Naive thymus-derived CD4-positive, alpha-beta T cell (primary cell): ENCODE measurements at regions of chr3 and their contacts with region 1.

Region 1: GRCh38 chr3:50568947-50569749 is at the start of gene HEMK1:
- DNase-seq: peak; percentile 71 to 95 (median 90)
- ATAC-seq: peak; percentile 81
- H3K4me3 ChIP-seq: peak within 1 kb of the TSS; percentile 97
- H3K4me3 Mint-ChIP-seq: peak within 1 kb of the TSS; percentile 86 to 99 (median 96)
- H3K27ac ChIP-seq: peak within 1 kb of the TSS; percentile 84
- H3K27ac Mint-ChIP-seq: peak within 1 kb of the TSS; percentile 90 to 98 (median 93)
- H3K4me1 ChIP-seq: peaks cover 49 to 57% of the 10 kb centered on the region in 2 donors
- H3K4me1 Mint-ChIP-seq: peaks cover 37 to 75% (median 71%) of the 10 kb centered on the region in 7 donors
- H3K27me3 ChIP-seq: no peaks in the 10 kb centered on the region
- H3K27me3 Mint-ChIP-seq: no peaks in the 10 kb centered on the region
- total RNA-seq, gene HEMK1: 32.1 to 71.1 (median 66.1) TPM

Region 2: GRCh38 chr3:50163572-50164455 is 405.3 kb before region 1 on chr3:
- CTCF ChIA-PET with region 1: no interaction called
- POLR2A ChIA-PET with region 1: no interaction called
- intact Hi-C with region 1: no loop called
- DNase-seq: no peak
- ATAC-seq: no peak
- H3K4me3 ChIP-seq: no peak overlapping the region
- H3K4me3 Mint-ChIP-seq: no peak overlapping the region
- H3K27ac ChIP-seq: no peak overlapping the region
- H3K27ac Mint-ChIP-seq: no peak overlapping the region
- H3K4me1 ChIP-seq: no peaks in the 10 kb centered on the region
- H3K4me1 Mint-ChIP-seq: peaks cover 0 to 3% (median 0%) of the 10 kb centered on the region in 7 donors
- H3K27me3 ChIP-seq: no peaks in the 10 kb centered on the region
- H3K27me3 Mint-ChIP-seq: peaks cover 0 to 7% (median 0%) of the 10 kb centered on the region in 5 donors

Region 3: GRCh38 chr3:50235716-50236496 is 333.2 kb before region 1 on chr3 and contains the start of gene GNAI2:
- CTCF ChIA-PET with region 1: no interaction called
- POLR2A ChIA-PET with region 1: no interaction called
- intact Hi-C with region 1: loop called (anchors 1 to 5 kb)
- DNase-seq: peak; percentile 95 to 99 (median 99)
- ATAC-seq: peak; percentile 93
- H3K4me3 ChIP-seq: peak within 1 kb of the TSS; percentile 90
- H3K4me3 Mint-ChIP-seq: peak within 1 kb of the TSS; percentile 92 to 99 (median 98)
- H3K27ac ChIP-seq: peak within 1 kb of the TSS; percentile 84
- H3K27ac Mint-ChIP-seq: peak within 1 kb of the TSS; percentile 87 to 97 (median 95)
- H3K4me1 ChIP-seq: peaks cover 30 to 35% of the 10 kb centered on the region in 2 donors
- H3K4me1 Mint-ChIP-seq: peaks cover 12 to 41% (median 37%) of the 10 kb centered on the region in 7 donors
- H3K27me3 ChIP-seq: no peaks in the 10 kb centered on the region
- H3K27me3 Mint-ChIP-seq: no peaks in the 10 kb centered on the region
- total RNA-seq, gene GNAI2: 225 to 442 (median 282) TPM

Region 4: DNA sequence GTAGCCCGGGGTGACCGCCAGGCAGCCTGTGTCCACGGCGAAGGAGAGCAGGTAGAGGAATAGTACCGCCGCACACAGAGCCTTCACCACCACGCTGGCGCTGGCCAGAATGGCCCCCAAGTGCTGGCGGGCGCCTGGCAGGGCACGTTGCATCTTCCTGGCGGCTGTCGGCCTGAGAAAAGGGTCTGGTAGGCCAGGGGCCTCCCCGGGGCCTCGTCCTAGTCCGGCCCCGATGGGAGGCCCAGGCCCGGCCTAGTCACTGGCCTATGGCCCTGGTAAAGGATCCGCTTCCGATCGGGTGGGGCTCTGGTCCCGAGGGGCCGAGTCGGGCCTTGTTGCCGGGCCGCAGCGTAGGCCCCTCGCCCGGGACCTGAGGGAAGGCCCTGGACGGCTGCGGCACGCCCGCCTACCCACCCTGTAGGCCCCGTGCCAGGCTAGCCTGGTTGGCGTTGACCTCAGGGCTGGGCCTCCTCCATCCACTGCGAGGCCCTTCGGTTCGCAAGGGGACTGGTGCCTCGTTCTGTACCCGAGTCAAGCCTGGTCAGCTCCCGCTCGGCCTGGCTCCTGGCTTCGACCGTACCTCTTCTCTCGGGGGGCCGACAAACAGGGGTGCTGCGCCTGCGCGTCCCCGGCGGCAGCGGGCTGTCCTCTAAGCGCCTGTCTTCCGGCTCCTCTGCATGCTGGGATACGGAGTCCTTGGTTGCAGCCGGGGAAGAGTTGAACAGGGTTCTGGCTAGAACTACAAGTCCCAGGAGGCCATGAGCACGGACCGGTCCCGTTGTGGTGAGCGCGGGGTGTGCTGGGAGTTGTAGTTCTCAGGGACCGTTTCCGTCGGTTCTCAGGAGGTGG is 210.0 kb before region 1 on chr3 and contains the start of gene TMEM115:
- CTCF ChIA-PET with region 1: no interaction called
- POLR2A ChIA-PET with region 1: interaction called, 6 read pairs
- intact Hi-C with region 1: loop called (anchors 1 to 2 kb)
- DNase-seq: peak; percentile 71 to 99 (median 95)
- ATAC-seq: peak; percentile 100
- H3K4me3 ChIP-seq: peak within 1 kb of the TSS; percentile 88
- H3K4me3 Mint-ChIP-seq: peak within 1 kb of the TSS; percentile 91 to 99 (median 98)
- H3K27ac ChIP-seq: peak within 1 kb of the TSS; percentile 93
- H3K27ac Mint-ChIP-seq: peak within 1 kb of the TSS; percentile 73 to 98 (median 96)
- H3K4me1 ChIP-seq: peaks cover 30% of the 10 kb centered on the region in 2 donors
- H3K4me1 Mint-ChIP-seq: peaks cover 32 to 54% (median 43%) of the 10 kb centered on the region in 7 donors
- H3K27me3 ChIP-seq: no peaks in the 10 kb centered on the region
- H3K27me3 Mint-ChIP-seq: no peaks in the 10 kb centered on the region
- total RNA-seq, gene TMEM115: 17.7 to 32.4 (median 19.9) TPM

Region 5: DNA sequence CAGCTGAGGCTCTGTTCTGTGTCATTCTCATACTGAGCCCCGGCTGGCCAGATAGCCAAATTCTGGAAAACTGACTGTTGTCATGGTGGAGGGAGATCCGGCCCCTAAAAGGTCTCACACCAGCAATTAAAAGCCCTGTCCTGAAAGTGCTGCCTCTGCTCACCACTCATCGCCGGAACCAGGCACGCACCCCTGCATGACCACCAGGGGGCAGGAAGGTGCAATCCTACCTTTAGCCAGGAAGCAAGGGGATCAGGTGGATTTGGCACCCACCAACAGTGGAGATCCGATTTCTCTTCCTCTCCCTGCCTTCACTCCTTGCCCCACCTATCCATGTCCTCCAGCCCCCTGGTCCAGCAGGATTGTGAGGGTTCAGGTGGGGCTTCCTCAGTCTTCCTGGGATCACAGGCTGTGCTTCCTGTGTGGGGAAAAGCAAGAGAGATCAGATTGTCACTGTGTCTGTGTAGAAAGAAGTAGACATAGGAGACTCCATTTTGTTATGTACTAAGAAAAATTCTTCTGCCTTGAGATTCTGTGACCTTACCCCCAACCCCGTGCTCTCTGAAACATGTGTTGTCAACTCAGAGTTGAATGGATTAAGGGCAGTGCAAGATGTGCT is 49.6 kb before region 1 on chr3:
- CTCF ChIA-PET with region 1: interaction called, 3 read pairs
- POLR2A ChIA-PET with region 1: interaction called, 4 read pairs
- intact Hi-C with region 1: loop called in 1 of 2 experiments (anchors 1 kb)
- DNase-seq: peak; percentile 27 to 78 (median 60)
- ATAC-seq: peak; percentile 79
- H3K4me3 ChIP-seq: no peak overlapping the region
- H3K4me3 Mint-ChIP-seq: no peak overlapping the region
- H3K27ac ChIP-seq: no peak overlapping the region
- H3K27ac Mint-ChIP-seq: no peak overlapping the region
- H3K4me1 ChIP-seq: peaks cover 0 to 3% of the 10 kb centered on the region in 2 donors
- H3K4me1 Mint-ChIP-seq: peaks cover 5 to 16% (median 12%) of the 10 kb centered on the region in 7 donors
- H3K27me3 ChIP-seq: no peaks in the 10 kb centered on the region
- H3K27me3 Mint-ChIP-seq: peaks cover 0 to 42% (median 4%) of the 10 kb centered on the region in 5 donors

Region 6: GRCh38 chr3:50600841-50601591 is 31.9 kb after region 1 on chr3:
- CTCF ChIA-PET with region 1: interaction called, 578 read pairs
- POLR2A ChIA-PET with region 1: interaction called, 730 read pairs
- intact Hi-C with region 1: loop called in 1 of 2 experiments (anchors 1 kb)
- DNase-seq: peak; percentile 43 to 90 (median 58)
- ATAC-seq: peak; percentile 84
- H3K4me3 ChIP-seq: peak overlapping the region; percentile 57
- H3K4me3 Mint-ChIP-seq: peak overlapping the region; percentile 71 to 97 (median 84)
- H3K27ac ChIP-seq: peak overlapping the region; percentile 93
- H3K27ac Mint-ChIP-seq: peak overlapping the region; percentile 89 to 99 (median 95)
- H3K4me1 ChIP-seq: peaks cover 67 to 71% of the 10 kb centered on the region in 2 donors
- H3K4me1 Mint-ChIP-seq: peaks cover 63 to 83% (median 77%) of the 10 kb centered on the region in 7 donors
- H3K27me3 ChIP-seq: no peaks in the 10 kb centered on the region
- H3K27me3 Mint-ChIP-seq: no peaks in the 10 kb centered on the region

Region 7: DNA sequence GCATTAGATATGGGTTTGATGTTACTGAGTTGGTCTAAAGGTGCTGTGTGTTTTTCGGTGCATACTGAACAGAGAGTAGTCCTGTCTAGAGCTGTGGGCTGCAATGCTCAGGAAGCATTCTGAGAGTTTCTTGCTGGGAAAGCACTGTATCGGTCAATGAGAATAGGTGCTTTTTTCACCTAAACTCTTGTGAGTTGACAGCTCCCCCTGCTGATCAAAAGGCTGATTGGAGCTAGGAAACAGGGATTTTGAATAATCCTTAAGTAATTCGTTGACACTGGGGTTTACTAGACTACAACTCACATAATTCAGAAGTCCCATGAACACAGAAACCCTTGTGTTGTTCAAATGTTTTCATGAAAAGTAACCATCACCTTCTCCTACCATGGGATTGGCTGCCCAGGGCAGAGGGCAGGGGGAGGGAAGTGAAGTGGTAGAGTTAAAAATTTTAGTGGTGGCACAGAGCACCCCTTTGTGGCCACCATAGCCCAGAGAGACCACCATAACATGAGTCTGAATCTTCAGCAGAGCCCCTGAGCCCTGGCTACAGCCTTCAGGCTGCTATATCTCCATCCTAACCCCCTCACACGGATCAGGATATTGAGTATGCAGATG is 802.9 kb after region 1 on chr3:
- CTCF ChIA-PET with region 1: no interaction called
- POLR2A ChIA-PET with region 1: no interaction called
- intact Hi-C with region 1: loop called (anchors 1 kb)
- DNase-seq: peak in 8 of 9 donors; percentile 22 to 66 (median 49)
- ATAC-seq: peak; percentile 50
- H3K4me3 ChIP-seq: no peak overlapping the region
- H3K4me3 Mint-ChIP-seq: no peak overlapping the region
- H3K27ac ChIP-seq: no peak overlapping the region
- H3K27ac Mint-ChIP-seq: no peak overlapping the region
- H3K4me1 ChIP-seq: no peaks in the 10 kb centered on the region
- H3K4me1 Mint-ChIP-seq: peaks cover 0 to 7% (median 5%) of the 10 kb centered on the region in 7 donors
- H3K27me3 ChIP-seq: no peaks in the 10 kb centered on the region
- H3K27me3 Mint-ChIP-seq: peaks cover 0 to 4% (median 3%) of the 10 kb centered on the region in 5 donors